ENCODE measurements at regions of chr1 and their contacts with region 1.

Region 1: DNA sequence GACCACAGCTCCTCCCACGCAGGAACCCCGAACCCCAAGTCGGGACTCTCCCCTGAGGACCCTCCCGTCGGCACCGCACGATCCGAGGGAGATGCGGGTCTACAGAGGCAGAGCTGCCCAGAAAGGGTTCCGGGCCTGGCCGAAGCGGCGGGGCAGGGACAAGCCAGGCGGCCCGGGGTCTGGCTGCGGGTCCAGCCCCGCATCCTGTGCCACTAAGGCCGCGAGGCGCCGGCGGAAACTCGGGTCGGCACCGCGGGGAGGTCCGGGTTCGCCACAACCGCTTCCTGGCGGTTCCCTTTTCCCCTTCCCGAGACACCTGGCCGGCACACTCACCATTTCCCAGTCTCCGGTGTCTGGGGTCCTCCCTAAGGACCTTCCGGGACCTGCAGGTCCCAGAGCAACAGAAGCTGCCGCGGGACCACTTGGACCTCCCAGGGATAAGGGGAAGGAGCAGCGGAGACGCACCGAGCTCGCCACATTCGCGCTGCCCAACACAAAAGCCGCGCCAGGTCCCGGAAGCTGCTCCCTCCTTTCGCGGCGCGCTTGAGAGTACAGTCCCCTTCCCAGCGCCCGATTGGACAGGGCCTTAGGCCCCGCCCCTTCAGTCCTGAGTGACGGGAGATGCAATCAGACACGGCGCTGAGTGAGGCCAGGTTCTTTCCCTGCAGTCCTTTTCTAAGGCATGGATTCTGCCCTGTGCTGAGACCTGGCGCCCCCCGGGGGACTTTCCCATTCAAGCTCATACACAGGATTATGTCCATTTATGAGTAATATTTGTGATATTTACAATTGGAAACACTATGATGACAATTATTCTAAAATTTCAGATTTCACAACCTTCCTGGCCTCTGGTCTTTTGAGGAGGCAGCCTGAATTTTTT is at the start of gene ZNF670:
- DNase-seq: peak; percentile 95
- H3K4me3 ChIP-seq: peak within 1 kb of the TSS; percentile 66 to 85 (median 82)
- H3K27ac ChIP-seq: peak within 1 kb of the TSS; percentile 48
- H3K4me1 ChIP-seq: peaks cover 8% of the 10 kb centered on the region
- H3K27me3 ChIP-seq: no peaks in the 10 kb centered on the region
- CTCF ChIP-seq: no peak
- total RNA-seq, gene ZNF670: 3.3 to 4.1 TPM

Region 2: DNA sequence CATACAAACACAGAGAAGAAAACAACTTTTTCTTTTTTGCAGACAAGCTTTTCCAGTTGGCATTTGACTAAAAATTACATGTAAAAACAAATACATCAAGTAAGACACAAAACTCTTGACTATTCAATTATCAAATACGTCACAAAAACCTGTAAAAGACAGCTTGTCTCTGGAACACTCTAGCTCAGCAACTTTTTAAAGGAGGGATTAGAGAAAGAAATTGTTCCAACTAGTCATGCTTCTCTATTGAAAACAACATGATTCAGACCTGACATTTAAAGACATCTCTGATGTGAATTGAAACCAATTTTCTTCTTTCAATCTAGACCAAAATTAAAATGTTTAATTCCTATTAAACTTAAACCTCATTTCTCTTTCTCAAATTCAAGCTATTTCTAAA is 601.7 kb before region 1 on chr1:
- CTCF ChIA-PET with region 1: no interaction called
- dilution Hi-C with region 1: no loop called
- in situ Hi-C with region 1: no loop called
- intact Hi-C with region 1: no loop called
- DNase-seq: no peak
- H3K4me3 ChIP-seq: no peak overlapping the region
- H3K27ac ChIP-seq: no peak overlapping the region
- H3K4me1 ChIP-seq: no peaks in the 10 kb centered on the region
- H3K27me3 ChIP-seq: no peaks in the 10 kb centered on the region
- CTCF ChIP-seq: no peak

Region 3: GRCh38 chr1:246907472-246907871 is 171.0 kb before region 1 on chr1:
- CTCF ChIA-PET with region 1: no interaction called
- dilution Hi-C with region 1: no loop called
- in situ Hi-C with region 1: no loop called
- intact Hi-C with region 1: loop called (anchors 5 kb)
- DNase-seq: peak; percentile 5
- H3K4me3 ChIP-seq: no peak overlapping the region
- H3K27ac ChIP-seq: no peak overlapping the region
- H3K4me1 ChIP-seq: no peaks in the 10 kb centered on the region
- H3K27me3 ChIP-seq: no peaks in the 10 kb centered on the region
- CTCF ChIP-seq: peak; percentile 3 to 54

Region 4: GRCh38 chr1:247007511-247008405 is 70.7 kb before region 1 on chr1 and contains the start of gene ZNF695:
- CTCF ChIA-PET with region 1: no interaction called
- dilution Hi-C with region 1: no loop called
- in situ Hi-C with region 1: no loop called
- intact Hi-C with region 1: loop called (anchors 5 kb)
- DNase-seq: peak; percentile 96
- H3K4me3 ChIP-seq: peak within 1 kb of the TSS; percentile 49 to 69 (median 62)
- H3K27ac ChIP-seq: no peak within 1 kb of the TSS
- H3K4me1 ChIP-seq: no peaks in the 10 kb centered on the region
- H3K27me3 ChIP-seq: no peaks in the 10 kb centered on the region
- CTCF ChIP-seq: no peak
- total RNA-seq, gene ZNF695: 1.7 to 4.4 TPM

Region 5: DNA sequence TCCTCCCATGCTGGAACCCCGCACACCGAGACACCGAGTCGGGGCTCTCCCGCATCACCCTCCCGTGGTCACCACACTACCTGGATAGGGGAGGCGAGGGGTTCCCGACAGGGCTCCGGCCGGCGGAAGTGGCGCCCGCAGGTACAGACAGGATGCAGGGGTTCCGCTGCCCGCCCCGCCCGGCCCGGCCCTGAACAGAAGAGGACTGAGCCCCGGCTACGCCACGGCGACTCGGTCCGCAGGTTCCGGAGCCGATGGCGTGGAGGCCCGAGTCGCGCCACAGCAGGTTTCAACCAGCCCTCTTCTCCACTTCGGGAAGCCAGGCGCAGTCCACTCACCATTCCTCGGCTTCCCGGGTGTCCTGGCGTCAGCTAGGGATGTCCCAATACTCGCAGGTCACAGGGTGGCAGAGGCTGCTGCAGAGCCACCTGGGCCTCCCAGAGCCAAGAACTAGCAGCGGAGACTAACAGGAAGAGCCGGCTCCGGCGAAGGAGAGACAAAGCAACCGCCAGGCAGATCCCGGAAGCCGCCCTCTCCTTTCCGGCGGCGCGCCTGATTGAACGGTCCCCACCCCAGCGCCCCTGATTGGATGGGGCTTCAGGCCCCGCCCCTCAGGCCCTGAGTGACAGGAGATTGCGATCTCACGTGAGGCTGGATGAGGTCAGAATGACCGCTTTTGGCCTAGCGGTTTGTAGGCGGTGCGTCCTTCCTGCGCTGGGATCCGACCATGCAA is 25.5 kb after region 1 on chr1 and contains the start of gene ZNF669:
- CTCF ChIA-PET with region 1: no interaction called
- dilution Hi-C with region 1: no loop called
- in situ Hi-C with region 1: no loop called
- intact Hi-C with region 1: loop called (anchors 1 kb)
- DNase-seq: peak; percentile 92
- H3K4me3 ChIP-seq: peak within 1 kb of the TSS; percentile 64 to 95 (median 79)
- H3K27ac ChIP-seq: peak within 1 kb of the TSS; percentile 80
- H3K4me1 ChIP-seq: no peaks in the 10 kb centered on the region
- H3K27me3 ChIP-seq: no peaks in the 10 kb centered on the region
- CTCF ChIP-seq: no peak
- total RNA-seq, gene ZNF669: 7.4 to 9.0 TPM

Region 6: DNA sequence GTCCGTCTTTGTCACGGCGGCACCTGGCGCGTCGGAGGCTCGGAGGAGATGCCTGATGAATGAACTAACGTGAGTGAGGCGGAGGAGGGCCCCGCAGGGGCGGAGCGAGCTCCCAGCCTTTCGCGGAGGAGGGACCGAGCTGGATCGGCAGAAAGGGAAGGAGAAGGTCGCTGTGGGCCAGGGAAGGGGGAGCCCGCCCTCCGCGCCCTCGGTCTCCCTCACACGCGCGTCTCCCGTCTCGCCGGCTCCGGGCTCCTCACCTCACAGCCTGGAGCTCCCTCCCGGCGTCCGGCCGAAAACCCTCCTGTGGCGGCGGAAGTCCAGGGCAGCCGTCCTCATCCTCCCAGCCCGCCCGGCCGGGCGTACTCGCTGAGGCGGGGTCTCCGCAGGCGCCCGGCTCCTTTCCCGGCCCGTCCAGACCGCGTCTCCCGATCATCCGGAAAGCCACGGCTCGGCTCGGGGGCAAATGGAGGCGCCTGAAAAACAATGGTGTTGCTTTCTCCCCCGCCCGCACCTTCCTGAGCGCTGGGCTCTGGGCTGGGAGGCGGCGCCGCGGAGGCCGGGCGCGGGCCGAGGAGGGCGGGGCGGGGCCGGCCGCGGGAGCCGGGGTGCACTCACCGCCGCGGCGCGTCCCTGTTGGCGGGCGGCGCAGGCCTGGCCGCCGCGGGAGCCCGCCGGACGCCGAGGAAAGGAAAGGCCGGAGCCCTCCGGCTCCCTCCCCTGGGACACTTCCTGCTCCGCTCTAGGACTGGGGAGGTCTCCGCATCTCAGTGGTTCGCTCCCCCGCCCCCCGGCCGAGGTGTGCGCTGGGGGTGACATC is 252.9 kb after region 1 on chr1 and contains the start of gene ZNF496:
- CTCF ChIA-PET with region 1: no interaction called
- dilution Hi-C with region 1: no loop called
- in situ Hi-C with region 1: no loop called
- intact Hi-C with region 1: loop called (anchors 2 kb)
- DNase-seq: peak; percentile 78
- H3K4me3 ChIP-seq: peak within 1 kb of the TSS; percentile 89 to 93 (median 91)
- H3K27ac ChIP-seq: peak within 1 kb of the TSS; percentile 59
- H3K4me1 ChIP-seq: peaks cover 19% of the 10 kb centered on the region
- H3K27me3 ChIP-seq: no peaks in the 10 kb centered on the region
- CTCF ChIP-seq: no peak
- total RNA-seq, gene ZNF496: 18.3 to 23.8 TPM